Activated CD4-positive, alpha-beta memory T cell treated with anti-CD3 and anti-CD28 coated beads for 36 hours (primary cell): ENCODE measurements at regions of chr5 and their contacts with region 1.

Region 1: GRCh38 chr5:89097103-89097502 is 214.1 kb upstream of the MEF2C start:
- DNase-seq: no peak
- H3K4me3 Mint-ChIP-seq: no peak overlapping the region
- H3K27ac Mint-ChIP-seq: no peak overlapping the region
- H3K4me1 Mint-ChIP-seq: no peaks in the 10 kb centered on the region
- H3K27me3 Mint-ChIP-seq: no peaks in the 10 kb centered on the region

Region 2: GRCh38 chr5:88736494-88736893 is 360.6 kb before region 1 on chr5:
- CTCF ChIA-PET with region 1: no interaction called
- POLR2A ChIA-PET with region 1: no interaction called
- intact Hi-C with region 1: loop called (anchors 5 kb)
- DNase-seq: no peak
- H3K4me3 Mint-ChIP-seq: no peak overlapping the region
- H3K27ac Mint-ChIP-seq: no peak overlapping the region
- H3K4me1 Mint-ChIP-seq: peaks cover 2% of the 10 kb centered on the region
- H3K27me3 Mint-ChIP-seq: peaks cover 11% of the 10 kb centered on the region